ENCODE measurements at regions of chr14 and their contacts with region 1.

Region 1: DNA sequence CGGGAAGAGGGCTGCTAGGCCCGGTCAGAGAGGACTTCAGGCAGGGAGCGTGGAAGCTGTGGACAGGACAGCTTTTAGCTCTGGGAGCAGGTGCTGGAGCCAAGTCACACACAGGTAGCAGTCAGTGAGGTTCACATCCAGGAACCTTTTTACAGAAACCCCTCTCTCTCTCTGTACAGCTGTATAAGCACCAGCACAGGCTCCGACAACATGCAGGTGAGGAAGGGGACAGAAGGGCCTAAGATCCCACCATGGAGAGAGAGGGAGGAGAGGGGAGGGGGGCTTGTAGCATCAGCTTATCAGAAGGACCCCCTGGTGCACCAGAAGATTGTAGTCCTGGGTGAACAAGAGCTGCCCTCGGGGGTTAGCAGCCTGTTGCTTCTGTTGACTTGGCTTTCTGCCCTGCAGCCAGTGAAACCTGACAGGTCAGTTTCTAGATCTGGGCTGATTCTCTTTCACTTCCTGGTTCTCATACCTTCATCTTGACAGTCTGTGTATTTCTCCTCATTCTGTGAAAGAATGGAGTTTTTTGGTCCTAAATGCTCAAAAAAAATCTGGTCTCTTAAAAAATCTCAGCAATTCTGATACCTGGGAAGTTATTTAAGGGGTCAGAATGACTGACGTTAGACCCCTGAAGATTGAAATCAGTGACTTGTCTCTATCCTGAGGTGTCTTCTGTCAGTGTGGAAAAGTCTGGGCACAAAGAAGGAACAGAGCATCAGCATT is 23.6 kb downstream of the TTC9 start:
- DNase-seq: peak; percentile 40
- ATAC-seq: peak; percentile 62
- H3K4me3 Mint-ChIP-seq: peak overlapping the region; percentile 66
- H3K27ac Mint-ChIP-seq: peak overlapping the region; percentile 93
- H3K4me1 Mint-ChIP-seq: peaks cover 97% of the 10 kb centered on the region
- H3K27me3 Mint-ChIP-seq: no peaks in the 10 kb centered on the region
- CTCF ChIP-seq: no peak

Region 2: GRCh38 chr14:70600382-70601157 is 64.8 kb before region 1 on chr14 and contains the start of gene MED6:
- CTCF ChIA-PET with region 1: no interaction called
- POLR2A ChIA-PET with region 1: no interaction called
- intact Hi-C with region 1: loop called (anchors 1 kb)
- DNase-seq: peak; percentile 77
- ATAC-seq: peak; percentile 99
- H3K4me3 Mint-ChIP-seq: peak within 1 kb of the TSS; percentile 99
- H3K27ac Mint-ChIP-seq: peak within 1 kb of the TSS; percentile 94
- H3K4me1 Mint-ChIP-seq: peaks cover 43% of the 10 kb centered on the region
- H3K27me3 Mint-ChIP-seq: no peaks in the 10 kb centered on the region
- CTCF ChIP-seq: no peak
- total RNA-seq, gene MED6: 50.5 and 57.0 TPM in 2 replicates

Region 3: DNA sequence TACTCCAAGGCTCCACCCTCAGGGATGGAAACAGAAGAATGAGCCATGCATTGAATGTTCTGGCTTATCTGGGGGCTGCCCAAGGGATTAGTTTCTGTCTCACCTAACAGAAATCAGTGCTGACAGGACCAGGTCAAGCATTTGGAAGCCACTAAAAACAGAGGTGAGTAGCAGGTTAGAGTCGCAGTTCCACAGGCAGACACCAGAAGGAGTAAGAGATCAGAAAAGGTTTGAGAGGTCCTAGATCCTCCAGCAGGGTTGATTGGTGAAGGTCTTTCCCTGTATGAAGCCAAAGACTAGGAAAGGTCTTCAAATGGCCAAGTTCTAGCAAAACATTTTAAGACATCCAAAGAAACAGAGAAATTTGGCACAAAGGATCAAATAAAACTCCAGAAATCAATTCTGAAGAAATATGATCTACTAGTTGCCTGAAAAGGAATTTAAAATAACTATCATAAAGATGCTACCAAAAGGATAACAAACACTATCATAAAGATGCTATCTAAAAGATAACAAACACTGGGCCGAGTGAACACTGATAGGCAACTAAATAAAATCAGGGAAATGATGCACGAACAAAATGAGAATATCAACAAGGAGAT is 43.1 kb before region 1 on chr14:
- CTCF ChIA-PET with region 1: interaction called, 5 read pairs
- POLR2A ChIA-PET with region 1: no interaction called
- intact Hi-C with region 1: loop called (anchors 1 kb)
- DNase-seq: no peak
- ATAC-seq: peak; percentile 95
- H3K4me3 Mint-ChIP-seq: no peak overlapping the region
- H3K27ac Mint-ChIP-seq: no peak overlapping the region
- H3K4me1 Mint-ChIP-seq: peaks cover 19% of the 10 kb centered on the region
- H3K27me3 Mint-ChIP-seq: no peaks in the 10 kb centered on the region
- CTCF ChIP-seq: peak; percentile 74

Region 4: GRCh38 chr14:70655110-70655826 is 10.1 kb before region 1 on chr14:
- CTCF ChIA-PET with region 1: interaction called, 6 read pairs
- POLR2A ChIA-PET with region 1: interaction called, 35 read pairs
- intact Hi-C with region 1: loop called (anchors 1 kb)
- DNase-seq: peak; percentile 48
- ATAC-seq: peak; percentile 79
- H3K4me3 Mint-ChIP-seq: peak overlapping the region; percentile 80
- H3K27ac Mint-ChIP-seq: peak overlapping the region; percentile 98
- H3K4me1 Mint-ChIP-seq: peaks cover 83% of the 10 kb centered on the region
- H3K27me3 Mint-ChIP-seq: no peaks in the 10 kb centered on the region
- CTCF ChIP-seq: no peak

Measured in activated B cell treated with CpG ODN at 0.5 μM for 24 hours (primary cell).